ENCODE measurements at regions of chr1 and their contacts with region 1.

Region 1: GRCh38 chr1:24744911-24745710 is at the start of gene CLIC4:
- DNase-seq: peak; percentile 100
- H3K4me3 Mint-ChIP-seq: peak within 1 kb of the TSS; percentile 88
- H3K27ac Mint-ChIP-seq: peak within 1 kb of the TSS; percentile 77
- H3K4me1 Mint-ChIP-seq: peaks cover 52% of the 10 kb centered on the region
- H3K27me3 Mint-ChIP-seq: no peaks in the 10 kb centered on the region
- total RNA-seq, gene CLIC4: 38.0 to 44.3 TPM

Region 2: DNA sequence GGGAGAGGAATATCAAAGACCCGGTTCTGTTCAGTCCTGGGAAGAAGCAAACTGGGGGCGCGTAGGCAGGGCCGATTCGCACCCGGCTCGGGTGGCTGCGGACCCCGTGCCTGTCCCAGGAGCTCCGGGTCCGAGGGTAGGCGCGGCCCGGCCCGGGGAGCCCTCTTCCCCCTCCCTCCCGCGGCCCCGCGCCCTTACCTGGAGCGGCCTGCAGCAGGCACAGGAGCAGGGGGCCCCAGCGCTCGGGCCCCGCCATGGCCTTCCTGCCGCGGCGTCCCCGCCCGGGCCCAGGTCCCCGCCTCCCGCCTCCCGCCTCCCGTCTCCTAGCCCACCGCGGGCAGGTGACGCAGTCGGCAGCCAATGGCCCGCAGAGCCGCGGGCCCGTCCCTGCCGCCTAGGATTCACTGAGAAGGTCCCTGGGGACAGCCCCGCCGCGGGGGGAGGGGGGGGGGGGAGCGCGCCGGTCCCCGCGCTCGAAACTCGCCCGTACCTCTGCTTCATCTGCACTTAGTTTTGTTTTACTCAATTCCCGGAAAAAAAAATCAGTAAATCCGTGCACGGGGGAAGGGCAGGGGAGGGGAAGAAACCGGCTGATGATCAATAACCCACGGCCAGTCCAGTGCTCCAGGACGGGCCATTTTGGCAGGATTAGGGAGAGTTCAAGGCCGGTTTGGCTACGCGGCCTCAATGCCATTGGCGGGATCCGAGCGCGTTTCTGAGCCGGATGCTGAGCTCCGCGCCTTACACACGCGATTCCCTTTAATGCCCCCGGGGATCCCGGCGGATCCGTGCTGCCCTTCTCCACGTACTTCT is 557.9 kb before region 1 on chr1 and contains the start of gene IFNLR1:
- CTCF ChIA-PET with region 1: no interaction called
- intact Hi-C with region 1: loop called (anchors 5 kb)
- DNase-seq: peak; percentile 92
- H3K4me3 Mint-ChIP-seq: peak within 1 kb of the TSS; percentile 79
- H3K27ac Mint-ChIP-seq: peak within 1 kb of the TSS; percentile 18
- H3K4me1 Mint-ChIP-seq: peaks cover 50% of the 10 kb centered on the region
- H3K27me3 Mint-ChIP-seq: peaks cover 3% of the 10 kb centered on the region
- total RNA-seq, gene IFNLR1: 4.3 to 4.6 TPM

Region 3: DNA sequence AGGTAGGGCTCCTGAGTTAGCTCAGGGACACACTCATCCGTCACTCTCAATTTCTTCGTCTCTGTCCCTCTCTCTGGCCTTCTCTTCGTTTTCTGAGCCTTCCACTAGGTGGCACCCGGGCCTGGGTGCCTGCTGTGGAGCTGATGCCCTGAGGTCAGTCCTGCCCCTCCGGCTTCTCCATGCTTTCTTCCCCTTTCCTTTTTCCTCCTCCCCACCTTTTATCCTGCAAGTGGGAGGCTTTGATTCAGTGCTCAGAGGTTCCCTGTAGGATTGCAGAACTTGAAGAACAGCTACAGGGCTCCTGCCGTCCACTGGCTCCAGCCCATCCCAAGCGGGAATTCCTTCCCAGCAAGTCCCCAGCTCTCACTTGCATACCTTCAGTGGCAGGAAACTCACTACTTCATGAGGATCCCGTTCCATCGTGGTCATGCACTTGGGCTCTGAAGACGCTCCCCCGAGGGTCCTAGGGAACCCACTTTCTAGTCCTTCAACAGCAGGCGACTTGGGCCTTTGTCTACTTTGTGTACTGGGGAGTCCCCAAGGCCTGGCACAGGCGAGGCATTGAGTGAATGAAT is 56.4 kb before region 1 on chr1:
- CTCF ChIA-PET with region 1: interaction called, 7 read pairs
- intact Hi-C with region 1: loop called (anchors 2 kb)
- DNase-seq: peak; percentile 75
- H3K4me3 Mint-ChIP-seq: no peak overlapping the region
- H3K27ac Mint-ChIP-seq: no peak overlapping the region
- H3K4me1 Mint-ChIP-seq: no peaks in the 10 kb centered on the region
- H3K27me3 Mint-ChIP-seq: no peaks in the 10 kb centered on the region

Region 4: DNA sequence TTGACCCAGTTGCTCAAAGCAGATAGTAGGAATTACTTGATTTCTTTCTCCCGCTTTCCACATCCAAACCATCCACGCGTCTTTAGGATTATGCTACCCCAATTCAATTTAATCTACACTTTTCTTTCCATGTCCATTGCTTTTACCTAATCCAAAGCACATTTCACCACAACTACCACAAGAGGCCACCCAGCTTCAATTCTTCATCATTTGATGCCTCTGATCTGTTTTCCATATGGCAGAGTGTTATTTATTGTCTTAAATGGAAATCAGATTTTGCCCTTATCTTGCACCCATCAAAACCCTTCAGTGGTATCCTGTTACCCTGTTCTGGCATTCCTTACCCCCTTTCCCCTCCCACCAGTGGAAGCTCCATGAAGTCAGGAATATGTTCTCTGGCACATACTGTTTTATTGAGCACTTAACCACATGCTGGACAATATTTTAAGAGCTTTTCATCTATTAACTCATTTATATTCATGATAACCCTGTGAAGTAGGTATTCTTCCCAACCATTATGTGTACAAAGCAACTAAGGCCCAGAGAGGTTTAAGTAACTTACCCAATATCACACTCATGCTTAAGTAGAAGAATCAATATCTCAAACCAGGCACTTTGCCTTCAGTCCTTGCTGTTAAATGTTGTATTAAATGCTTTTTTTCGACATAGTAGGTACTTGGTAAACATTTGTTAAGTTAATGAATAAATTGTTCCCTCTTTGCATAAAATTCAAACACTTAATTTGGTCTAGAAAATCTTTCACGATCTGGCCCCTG is 34.8 kb after region 1 on chr1:
- CTCF ChIA-PET with region 1: no interaction called
- intact Hi-C with region 1: loop called (anchors 5 kb)
- DNase-seq: no peak
- H3K4me3 Mint-ChIP-seq: no peak overlapping the region
- H3K27ac Mint-ChIP-seq: no peak overlapping the region
- H3K4me1 Mint-ChIP-seq: peaks cover 2% of the 10 kb centered on the region
- H3K27me3 Mint-ChIP-seq: no peaks in the 10 kb centered on the region

Region 5: GRCh38 chr1:25232027-25232865 is 487.1 kb after region 1 on chr1 and contains the start of gene SYF2:
- CTCF ChIA-PET with region 1: no interaction called
- intact Hi-C with region 1: loop called (anchors 5 kb)
- DNase-seq: peak; percentile 92
- H3K4me3 Mint-ChIP-seq: no peak within 1 kb of the TSS
- H3K27ac Mint-ChIP-seq: no peak within 1 kb of the TSS
- H3K4me1 Mint-ChIP-seq: peaks cover 34% of the 10 kb centered on the region
- H3K27me3 Mint-ChIP-seq: no peaks in the 10 kb centered on the region
- total RNA-seq, gene SYF2: 39.7 to 46.8 TPM